HepG2 (cell line): ENCODE measurements at regions of chr5 and their contacts with region 1.

Region 1: GRCh38 chr5:138128334-138128733 is 10.9 kb downstream of the NME5 start:
- DNase-seq: no peak
- ATAC-seq: no peak
- H3K4me3 ChIP-seq: no peak overlapping the region
- H3K27ac ChIP-seq: no peak overlapping the region
- H3K4me1 ChIP-seq: no peaks in the 10 kb centered on the region
- H3K27me3 ChIP-seq: no peaks in the 10 kb centered on the region; a peak in 1 of 5 replicates
- CTCF ChIP-seq: no peak
- EP300 ChIP-seq: no peak
- POLR2A ChIP-seq: no peak
- RAD21 ChIP-seq: no peak

Region 2: DNA sequence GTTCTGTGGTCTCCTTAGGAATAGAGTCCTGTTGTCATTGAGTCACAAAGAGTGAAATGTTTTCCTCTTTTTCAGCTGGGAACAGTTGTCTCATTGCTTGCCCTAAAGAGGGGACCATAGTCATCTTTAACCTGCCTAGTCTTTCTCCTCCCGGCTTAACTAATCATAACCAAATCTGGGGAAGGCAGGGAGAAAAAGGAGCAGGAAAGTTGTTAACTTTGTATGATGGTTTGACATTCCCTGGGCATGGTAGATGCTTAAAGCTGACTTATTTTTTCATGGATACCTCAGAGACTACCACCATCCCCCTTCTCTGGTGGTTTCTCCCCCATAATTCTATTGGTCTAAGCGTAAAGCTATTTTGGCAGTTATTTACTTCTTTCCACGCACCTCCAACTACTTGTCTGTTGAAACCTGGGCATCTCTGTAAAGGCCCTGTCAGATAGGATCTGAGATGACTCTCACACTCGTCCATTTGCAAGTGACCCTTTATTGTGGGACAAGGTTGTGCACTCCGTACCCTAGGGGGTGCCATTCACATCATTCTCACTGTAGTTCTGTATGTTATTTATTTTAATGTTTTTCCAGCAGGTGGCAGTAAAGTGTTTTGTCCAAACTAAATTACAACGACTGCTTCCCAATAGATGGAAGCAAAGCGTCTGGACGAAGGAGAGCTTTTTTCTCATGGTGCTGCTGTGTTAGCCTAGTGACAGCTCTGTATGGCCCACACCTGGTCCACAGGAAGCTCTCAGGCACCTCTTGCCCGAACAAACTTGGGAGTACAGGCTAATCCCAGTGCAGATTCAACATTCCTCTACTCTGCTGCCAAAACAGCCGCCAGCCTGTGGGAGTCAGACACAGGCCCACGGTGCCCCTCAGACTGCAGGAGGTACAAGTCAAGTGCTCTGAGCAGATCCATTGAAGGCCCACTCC is 92.5 kb before region 1 on chr5:
- CTCF ChIA-PET with region 1: interaction called, 17 read pairs
- POLR2A ChIA-PET with region 1: interaction called, 3 read pairs
- in situ Hi-C with region 1: no loop called
- intact Hi-C with region 1: loop called (anchors 1 kb)
- DNase-seq: peak; percentile 91
- ATAC-seq: peak; percentile 80
- H3K4me3 ChIP-seq: peak overlapping the region in 1 of 3 experiments; percentile 15; a peak in 1 of 6 replicates
- H3K27ac ChIP-seq: no peak overlapping the region
- H3K4me1 ChIP-seq: peaks cover 26% of the 10 kb centered on the region
- H3K27me3 ChIP-seq: no peaks in the 10 kb centered on the region; a peak in 1 of 5 replicates
- CTCF ChIP-seq: peak; percentile 88
- EP300 ChIP-seq: no peak
- POLR2A ChIP-seq: no peak
- RAD21 ChIP-seq: peak; percentile 74

Region 3: DNA sequence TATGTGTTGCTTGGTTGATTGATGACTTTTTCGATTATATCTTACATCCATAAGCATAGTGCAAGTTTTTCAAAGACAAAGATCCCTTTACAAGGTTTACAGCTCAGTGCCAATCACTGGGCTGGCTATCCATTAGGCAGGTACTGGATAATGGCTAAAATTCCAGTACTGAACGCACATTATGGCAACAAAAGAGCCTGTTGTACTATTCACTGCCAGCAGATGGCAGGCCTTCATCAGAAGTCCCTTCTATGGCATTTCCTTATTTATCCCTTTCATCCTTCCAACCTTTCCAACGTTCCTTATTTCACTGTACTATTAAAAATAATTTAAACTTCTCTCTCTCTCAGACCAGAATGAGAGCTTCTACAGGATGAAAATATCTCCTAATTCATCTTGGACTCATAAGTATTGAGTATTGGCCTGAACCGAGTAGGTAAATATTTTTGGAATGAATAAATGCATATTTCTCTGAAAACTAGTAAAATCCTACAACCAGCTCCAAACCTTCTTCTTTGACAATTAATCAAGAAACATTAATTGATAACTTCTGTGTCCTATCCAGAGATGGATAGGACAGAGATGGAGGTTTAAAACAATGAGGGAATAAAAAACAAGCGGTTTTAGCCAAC is 51.2 kb before region 1 on chr5:
- CTCF ChIA-PET with region 1: interaction called, 69 read pairs
- POLR2A ChIA-PET with region 1: no interaction called
- in situ Hi-C with region 1: loop called (anchors 5 kb)
- intact Hi-C with region 1: loop called (anchors 1 kb)
- DNase-seq: peak; percentile 61
- ATAC-seq: peak; percentile 71
- H3K4me3 ChIP-seq: no peak overlapping the region
- H3K27ac ChIP-seq: no peak overlapping the region
- H3K4me1 ChIP-seq: peaks cover 12% of the 10 kb centered on the region
- H3K27me3 ChIP-seq: no peaks in the 10 kb centered on the region; a peak in 1 of 5 replicates
- CTCF ChIP-seq: peak; percentile 85
- EP300 ChIP-seq: no peak
- POLR2A ChIP-seq: no peak
- RAD21 ChIP-seq: peak; percentile 75